Motor neuron (in vitro differentiated cells): ENCODE measurements at regions of chr2 and their contacts with region 1.

Region 1: GRCh38 chr2:231900486-231900942 is 25.7 kb downstream of the NPPC start:
- ATAC-seq: peak; percentile 33 to 97 (median 66)
- H3K4me3 ChIP-seq: no peak overlapping the region
- H3K27ac ChIP-seq: no peak overlapping the region
- H3K4me1 ChIP-seq: no peaks in the 10 kb centered on the region

Region 2: GRCh38 chr2:232315049-232315922 is 414.8 kb after region 1 on chr2:
- in situ Hi-C with region 1: loop called in 6 of 9 experiments (anchors 10 to 25 kb)
- ATAC-seq: peak in 2 of 8 experiments; percentile 81 to 87
- H3K4me3 ChIP-seq: no peak overlapping the region
- H3K27ac ChIP-seq: no peak overlapping the region
- H3K4me1 ChIP-seq: peaks cover 3 to 16% of the 10 kb centered on the region in 2 donors

Region 3: DNA sequence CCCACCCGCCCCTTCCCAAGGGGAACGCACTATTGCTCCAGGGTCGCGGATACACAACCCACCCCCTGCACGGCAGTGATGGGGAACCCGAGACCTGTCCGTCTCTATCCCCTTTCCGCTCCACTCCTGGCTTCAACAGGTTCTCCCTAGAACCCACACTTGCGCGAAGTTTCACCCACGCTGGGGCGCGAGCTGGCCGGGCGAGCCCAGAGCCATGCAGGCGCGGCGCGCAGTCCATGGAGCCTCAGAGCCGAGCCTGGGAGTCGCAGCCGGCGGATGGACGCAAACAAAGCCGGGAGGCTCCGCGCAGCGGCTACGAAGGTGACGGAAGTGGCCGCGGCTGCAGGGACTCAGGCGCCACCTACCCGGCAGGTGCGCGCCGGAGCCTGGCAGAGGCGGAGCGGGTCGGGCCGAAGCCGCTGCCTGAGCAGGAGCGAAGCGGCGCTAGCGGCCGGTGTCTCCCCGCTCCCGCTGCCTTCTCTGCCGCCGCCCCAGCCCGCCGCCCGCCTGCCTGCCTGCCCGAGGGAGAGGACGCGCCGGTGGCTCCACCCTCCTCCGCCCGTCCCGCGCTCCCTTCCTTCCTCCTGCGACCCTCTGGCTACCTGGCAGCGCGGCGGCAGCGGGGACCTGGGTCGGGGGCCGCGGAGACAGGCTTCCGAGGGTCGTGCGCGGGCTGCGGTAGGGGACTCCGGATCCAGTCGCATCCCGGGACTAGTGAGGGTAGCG is 520.1 kb after region 1 on chr2:
- in situ Hi-C with region 1: loop called in 6 of 9 experiments (anchors 25 kb)
- ATAC-seq: peak; percentile 8 to 59 (median 22)
- H3K4me3 ChIP-seq: peak overlapping the region; percentile 16 to 29 (median 26)
- H3K27ac ChIP-seq: no peak overlapping the region
- H3K4me1 ChIP-seq: peaks cover 0 to 11% of the 10 kb centered on the region in 2 donors

Region 4: DNA sequence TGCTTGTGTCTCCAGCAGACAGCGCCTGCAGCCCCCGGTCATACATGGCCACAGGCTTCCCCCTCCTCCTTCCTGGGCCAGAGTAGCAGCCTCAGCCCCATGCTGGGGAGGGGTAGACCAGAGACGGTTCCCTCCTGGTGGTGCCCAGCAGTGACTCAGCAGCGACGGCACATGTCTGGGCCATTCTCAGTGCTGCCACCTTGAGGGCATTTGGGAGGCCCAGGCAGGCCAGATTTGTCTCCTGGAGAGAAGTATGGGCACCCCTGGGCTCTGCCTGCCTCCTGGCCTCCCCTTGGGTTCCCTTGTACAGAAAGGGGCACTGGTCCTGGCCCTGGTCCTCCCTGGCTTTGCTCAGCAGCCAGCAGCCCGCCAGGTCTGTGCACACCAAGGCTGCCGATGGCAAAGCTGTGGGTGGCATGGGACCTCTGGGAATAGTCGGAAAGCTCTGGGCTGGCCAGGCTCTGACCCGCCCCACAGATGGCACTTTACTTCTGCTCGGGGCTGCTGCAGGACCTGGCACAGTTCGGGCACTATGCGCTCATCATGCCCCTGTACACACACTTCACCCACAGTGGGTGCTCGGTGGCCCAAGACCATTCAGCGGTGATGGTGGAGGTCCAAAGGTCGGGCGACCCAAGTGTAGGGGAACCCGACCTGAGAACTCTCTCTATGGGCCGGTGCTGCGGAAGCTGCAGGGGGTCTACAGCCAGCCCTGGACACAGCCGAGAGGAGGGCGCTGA is 544.1 kb after region 1 on chr2:
- in situ Hi-C with region 1: loop called in 6 of 9 experiments (anchors 10 to 25 kb)
- ATAC-seq: peak in 3 of 8 experiments; percentile 57 to 73 (median 66)
- H3K4me3 ChIP-seq: no peak overlapping the region
- H3K27ac ChIP-seq: no peak overlapping the region
- H3K4me1 ChIP-seq: peaks cover 20 to 26% of the 10 kb centered on the region in 2 donors

Region 5: GRCh38 chr2:232537079-232537478 is 636.6 kb after region 1 on chr2:
- in situ Hi-C with region 1: loop called in 1 of 9 experiments (anchors 25 kb)
- ATAC-seq: no peak
- H3K4me3 ChIP-seq: no peak overlapping the region
- H3K27ac ChIP-seq: no peak overlapping the region
- H3K4me1 ChIP-seq: peaks cover 5 to 21% of the 10 kb centered on the region in 2 donors